ENCODE measurements at regions of chr7 and their contacts with region 1.

Region 1: DNA sequence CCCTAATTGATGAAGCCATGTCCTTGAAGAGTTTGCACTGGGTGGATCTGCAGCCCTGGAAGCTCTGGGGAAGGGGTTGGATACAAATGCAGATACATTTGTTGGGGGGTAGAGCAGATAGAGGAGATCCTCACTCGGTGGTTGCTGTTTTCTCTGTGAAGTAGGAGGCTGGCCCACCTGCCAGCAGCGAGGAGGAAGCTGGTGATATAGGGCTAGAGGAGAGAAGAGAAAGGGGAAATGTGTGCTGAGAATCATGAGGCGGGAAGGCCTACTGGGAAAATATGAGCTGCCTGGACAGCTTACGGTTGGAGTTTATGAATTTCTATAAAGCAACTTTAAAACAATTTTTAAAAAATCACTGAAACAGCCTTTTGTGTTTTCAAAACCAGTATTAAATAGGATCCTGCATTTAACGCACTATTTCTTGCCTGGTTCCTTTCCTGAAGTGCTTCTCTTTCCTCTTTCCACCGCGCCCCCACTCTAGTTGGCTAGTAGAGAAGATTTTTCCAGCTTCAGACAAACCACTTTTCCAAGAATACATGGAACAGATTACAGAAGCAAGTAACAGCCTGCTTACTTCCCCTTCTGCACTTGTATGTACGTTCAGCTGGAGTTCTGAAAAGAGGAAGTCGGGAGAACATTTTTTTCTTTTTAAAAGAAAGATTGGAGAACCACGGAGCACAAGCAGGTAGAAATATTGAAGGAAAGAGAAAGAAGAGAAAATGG is 100.6 kb upstream of the GLCCI1 start:
- DNase-seq: no peak
- ATAC-seq: peak; percentile 42
- H3K4me3 ChIP-seq: no peak overlapping the region
- H3K27ac ChIP-seq: peak overlapping the region; percentile 16; the same call in 1 of the 2 replicates
- H3K4me1 ChIP-seq: peaks cover 7% of the 10 kb centered on the region
- H3K27me3 ChIP-seq: no peaks in the 10 kb centered on the region
- CTCF ChIP-seq: no peak
- EP300 ChIP-seq: no peak
- POLR2A ChIP-seq: no peak
- RAD21 ChIP-seq: no peak

Region 2: DNA sequence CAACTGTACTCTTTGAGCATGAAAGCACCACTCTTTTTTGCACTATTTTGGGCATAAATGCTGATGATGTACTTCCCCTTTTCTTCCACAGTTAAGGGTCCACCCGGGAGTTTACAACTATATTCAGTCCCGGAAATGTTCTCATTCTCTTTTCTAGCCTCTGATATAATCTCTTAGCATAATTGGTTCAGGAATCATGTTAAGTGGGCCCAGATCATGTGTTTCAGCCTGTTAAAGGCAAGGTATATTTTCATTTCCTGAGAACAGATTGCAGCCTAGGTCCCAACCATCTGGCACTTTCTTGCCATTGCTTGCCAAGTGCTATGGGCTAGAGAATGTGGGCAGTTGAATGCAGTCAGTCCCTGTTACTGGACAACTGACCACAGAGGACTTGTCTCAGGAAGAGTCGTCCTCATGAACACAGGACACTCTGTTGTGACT is 10.8 kb before region 1 on chr7:
- CTCF ChIA-PET with region 1: interaction called, 6 read pairs
- POLR2A ChIA-PET with region 1: interaction called, 9 read pairs
- RAD21 ChIA-PET with region 1: interaction called, 7 read pairs
- SMC1A ChIA-PET with region 1: interaction called, 25 read pairs
- in situ Hi-C with region 1: no loop called
- intact Hi-C with region 1: no loop called
- DNase-seq: no peak
- ATAC-seq: peak; percentile 84
- H3K4me3 ChIP-seq: no peak overlapping the region
- H3K27ac ChIP-seq: peak overlapping the region; percentile 29; the same call in 1 of the 2 replicates
- H3K4me1 ChIP-seq: peaks cover 4% of the 10 kb centered on the region
- H3K27me3 ChIP-seq: no peaks in the 10 kb centered on the region
- CTCF ChIP-seq: no peak
- EP300 ChIP-seq: no peak
- POLR2A ChIP-seq: no peak
- RAD21 ChIP-seq: no peak

Measured in GM12878 (cell line).